ENCODE measurements at regions of chr3 and their contacts with region 1.

Region 1: GRCh38 chr3:67357610-67358458 is 296.6 kb downstream of the SUCLG2 start:
- DNase-seq: peak; percentile 55 to 66
- H3K4me3 ChIP-seq: no peak overlapping the region
- H3K4me1 ChIP-seq: no peaks in the 10 kb centered on the region
- H3K27me3 ChIP-seq: no peaks in the 10 kb centered on the region

Region 2: GRCh38 chr3:67113802-67114407 is 243.9 kb before region 1 on chr3:
- in situ Hi-C with region 1: loop called (anchors 25 kb)
- DNase-seq: peak; percentile 55 to 87
- H3K4me3 ChIP-seq: no peak overlapping the region
- H3K4me1 ChIP-seq: no peaks in the 10 kb centered on the region
- H3K27me3 ChIP-seq: no peaks in the 10 kb centered on the region